ENCODE measurements at regions of chr6 and their contacts with region 1.

Region 1: GRCh38 chr6:3258720-3259490 is at the start of gene PSMG4:
- DNase-seq: no peak
- H3K4me3 ChIP-seq: peak within 1 kb of the TSS; percentile 97
- CTCF ChIP-seq: no peak

Region 2: GRCh38 chr6:3094815-3095214 is 164.1 kb before region 1 on chr6:
- CTCF ChIA-PET with region 1: no interaction called
- POLR2A ChIA-PET with region 1: no interaction called
- DNase-seq: no peak
- H3K4me3 ChIP-seq: no peak overlapping the region
- CTCF ChIP-seq: no peak

Region 3: GRCh38 chr6:3125815-3126214 is 133.1 kb before region 1 on chr6:
- CTCF ChIA-PET with region 1: interaction called, 221 read pairs
- POLR2A ChIA-PET with region 1: no interaction called
- DNase-seq: no peak
- H3K4me3 ChIP-seq: no peak overlapping the region
- CTCF ChIP-seq: no peak